ENCODE measurements at regions of chr15 and their contacts with region 1.

Region 1: GRCh38 chr15:59453474-59454215 is 15.7 kb downstream of the FAM81A start:
- DNase-seq: no peak
- ATAC-seq: no peak
- H3K4me3 ChIP-seq: no peak overlapping the region
- H3K27ac ChIP-seq: no peak overlapping the region
- H3K4me1 ChIP-seq: no peaks in the 10 kb centered on the region
- H3K27me3 ChIP-seq: peaks cover 6% of the 10 kb centered on the region
- CTCF ChIP-seq: no peak
- POLR2A ChIP-seq: no peak
- RAD21 ChIP-seq: no peak

Region 2: DNA sequence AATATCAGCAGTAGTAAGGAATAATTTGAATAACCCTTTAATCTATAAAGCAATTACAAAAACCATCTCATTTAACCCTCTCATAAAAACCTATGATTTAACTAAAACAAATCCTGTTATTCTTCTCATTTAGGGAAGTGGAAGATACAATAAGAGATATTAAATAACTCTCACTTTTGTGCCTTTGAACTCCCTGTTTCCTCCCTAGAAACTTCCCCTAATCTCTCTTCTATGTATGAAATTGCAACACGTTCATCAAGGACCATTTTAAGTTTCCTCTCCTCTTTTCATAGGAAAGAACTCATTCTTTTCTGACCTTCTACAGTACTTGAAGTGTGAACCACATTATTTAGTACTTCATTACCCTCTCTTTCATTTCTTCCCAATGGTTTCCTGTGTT is 34.5 kb before region 1 on chr15:
- CTCF ChIA-PET with region 1: no interaction called
- POLR2A ChIA-PET with region 1: no interaction called
- dilution Hi-C with region 1: no loop called
- in situ Hi-C with region 1: no loop called
- intact Hi-C with region 1: loop called (anchors 5 kb)
- DNase-seq: no peak
- ATAC-seq: no peak
- H3K4me3 ChIP-seq: no peak overlapping the region
- H3K27ac ChIP-seq: no peak overlapping the region
- H3K4me1 ChIP-seq: no peaks in the 10 kb centered on the region
- H3K27me3 ChIP-seq: peaks cover 21% of the 10 kb centered on the region
- CTCF ChIP-seq: no peak
- POLR2A ChIP-seq: no peak
- RAD21 ChIP-seq: no peak

Measured in IMR-90 (cell line).